ENCODE measurements at regions of chrX and their contacts with region 1.

Region 1: DNA sequence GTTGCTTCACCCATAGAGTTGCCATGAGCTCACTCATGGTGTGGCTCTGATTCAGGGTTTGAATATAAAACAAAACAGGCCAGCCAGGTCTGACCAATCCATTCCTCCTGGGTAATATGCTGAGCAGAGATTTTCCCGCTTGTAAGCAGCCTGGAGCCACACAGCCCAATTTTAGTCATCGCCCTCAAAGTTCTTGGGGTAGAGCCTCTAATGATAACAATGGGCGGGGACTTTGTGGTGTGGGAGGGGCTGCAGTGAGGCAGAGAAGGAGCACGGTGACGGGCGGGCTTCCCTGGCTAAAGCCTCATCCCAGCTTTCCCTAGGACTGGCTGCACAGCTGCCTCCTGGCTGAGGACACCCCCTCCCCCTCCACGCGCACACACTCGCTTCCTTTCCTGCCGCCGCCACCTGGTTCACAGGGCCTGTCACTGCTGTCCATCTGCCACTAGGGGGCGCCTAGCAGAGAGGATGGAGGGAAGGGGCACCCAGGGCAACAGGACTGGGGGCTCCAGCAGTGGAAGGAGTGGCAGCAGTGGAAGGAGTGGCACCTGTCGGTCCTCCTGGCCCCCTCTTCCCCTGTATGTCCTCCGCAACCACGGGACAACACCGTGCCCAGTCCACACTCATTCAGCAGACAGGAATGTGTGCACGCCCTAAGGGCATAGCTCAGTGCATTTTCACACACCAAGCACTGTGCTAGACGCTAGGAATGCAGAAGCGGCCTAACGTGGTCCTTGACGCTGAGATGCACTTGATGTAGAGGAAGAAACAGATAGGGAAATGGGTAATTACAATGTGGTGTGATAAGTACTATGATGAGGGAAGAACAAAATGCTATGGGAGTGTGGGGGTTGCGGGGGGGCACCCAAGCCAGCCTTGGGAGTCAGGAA is 26.8 kb downstream of the PRPS1 start:
- DNase-seq: peak; percentile 84
- H3K4me3 Mint-ChIP-seq: peak overlapping the region; percentile 45
- H3K27ac Mint-ChIP-seq: peak overlapping the region; percentile 89
- H3K4me1 Mint-ChIP-seq: peaks cover 15% of the 10 kb centered on the region
- H3K27me3 Mint-ChIP-seq: peaks cover 44% of the 10 kb centered on the region
- CTCF ChIP-seq: peak; percentile 66

Region 2: DNA sequence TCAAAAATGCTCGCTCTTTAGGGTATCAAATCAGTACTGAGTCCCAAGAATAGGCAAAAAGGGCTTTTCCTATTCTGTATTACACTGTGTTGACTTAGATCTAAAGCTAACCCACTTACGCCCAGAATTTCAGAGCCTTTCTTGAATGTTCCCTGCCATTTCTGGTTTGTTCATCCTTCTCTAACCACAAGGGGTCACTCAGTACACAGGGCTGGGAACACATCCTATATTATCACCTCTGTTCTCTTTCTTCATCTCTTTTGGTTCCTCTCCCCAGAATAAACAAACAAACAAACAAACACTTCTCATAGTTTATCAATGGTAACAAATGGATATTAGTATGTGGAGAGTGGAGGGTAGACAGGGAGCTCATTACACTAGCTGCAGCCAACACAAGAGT is 629.6 kb before region 1 on chrX:
- CTCF ChIA-PET with region 1: interaction called, 3 read pairs
- POLR2A ChIA-PET with region 1: interaction called, 3 read pairs
- intact Hi-C with region 1: loop called (anchors 10 kb)
- DNase-seq: peak; percentile 50
- H3K4me3 Mint-ChIP-seq: no peak overlapping the region
- H3K27ac Mint-ChIP-seq: no peak overlapping the region
- H3K4me1 Mint-ChIP-seq: no peaks in the 10 kb centered on the region
- H3K27me3 Mint-ChIP-seq: peaks cover 71% of the 10 kb centered on the region
- CTCF ChIP-seq: peak; percentile 58

Region 3: DNA sequence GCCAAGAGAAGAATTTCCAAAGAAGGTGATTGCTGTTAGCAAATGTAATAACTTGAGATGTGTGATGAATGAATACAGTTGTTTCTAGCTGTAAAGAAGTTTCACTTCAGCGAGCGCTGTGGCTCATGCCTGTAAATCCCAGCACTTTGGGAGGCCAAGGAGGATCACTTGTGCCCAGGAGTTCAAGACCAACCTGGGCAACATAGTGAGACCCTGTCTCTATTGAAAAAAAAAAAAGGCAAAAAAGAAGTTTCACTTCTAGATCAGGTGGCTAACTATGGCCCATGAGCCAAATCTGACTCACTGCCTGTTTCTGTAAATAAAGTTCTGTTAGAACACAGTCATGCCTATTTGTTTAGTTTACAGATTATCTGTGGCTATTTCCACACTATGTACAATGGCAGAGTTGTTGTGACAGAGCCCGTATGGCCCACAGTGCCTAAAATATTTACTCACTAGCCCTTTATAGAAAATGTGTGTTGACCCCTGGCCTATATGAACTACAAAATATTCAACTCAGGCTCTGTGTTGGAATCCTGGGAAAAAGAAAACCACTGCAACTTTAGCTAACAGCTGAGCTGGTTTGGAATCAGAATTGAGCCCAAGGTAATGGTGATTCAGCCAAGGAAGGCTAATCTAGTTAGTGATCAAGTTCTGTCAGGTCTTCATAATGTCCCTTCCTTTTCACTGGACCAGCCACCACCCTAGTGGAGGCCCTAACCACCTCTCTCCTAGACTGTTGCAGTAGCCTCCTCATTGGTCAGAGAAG is 80.9 kb before region 1 on chrX:
- CTCF ChIA-PET with region 1: no interaction called
- POLR2A ChIA-PET with region 1: no interaction called
- intact Hi-C with region 1: no loop called
- DNase-seq: peak; percentile 58
- H3K4me3 Mint-ChIP-seq: no peak overlapping the region
- H3K27ac Mint-ChIP-seq: peak overlapping the region; percentile 36
- H3K4me1 Mint-ChIP-seq: peaks cover 12% of the 10 kb centered on the region
- H3K27me3 Mint-ChIP-seq: peaks cover 10% of the 10 kb centered on the region
- CTCF ChIP-seq: no peak

Region 4: DNA sequence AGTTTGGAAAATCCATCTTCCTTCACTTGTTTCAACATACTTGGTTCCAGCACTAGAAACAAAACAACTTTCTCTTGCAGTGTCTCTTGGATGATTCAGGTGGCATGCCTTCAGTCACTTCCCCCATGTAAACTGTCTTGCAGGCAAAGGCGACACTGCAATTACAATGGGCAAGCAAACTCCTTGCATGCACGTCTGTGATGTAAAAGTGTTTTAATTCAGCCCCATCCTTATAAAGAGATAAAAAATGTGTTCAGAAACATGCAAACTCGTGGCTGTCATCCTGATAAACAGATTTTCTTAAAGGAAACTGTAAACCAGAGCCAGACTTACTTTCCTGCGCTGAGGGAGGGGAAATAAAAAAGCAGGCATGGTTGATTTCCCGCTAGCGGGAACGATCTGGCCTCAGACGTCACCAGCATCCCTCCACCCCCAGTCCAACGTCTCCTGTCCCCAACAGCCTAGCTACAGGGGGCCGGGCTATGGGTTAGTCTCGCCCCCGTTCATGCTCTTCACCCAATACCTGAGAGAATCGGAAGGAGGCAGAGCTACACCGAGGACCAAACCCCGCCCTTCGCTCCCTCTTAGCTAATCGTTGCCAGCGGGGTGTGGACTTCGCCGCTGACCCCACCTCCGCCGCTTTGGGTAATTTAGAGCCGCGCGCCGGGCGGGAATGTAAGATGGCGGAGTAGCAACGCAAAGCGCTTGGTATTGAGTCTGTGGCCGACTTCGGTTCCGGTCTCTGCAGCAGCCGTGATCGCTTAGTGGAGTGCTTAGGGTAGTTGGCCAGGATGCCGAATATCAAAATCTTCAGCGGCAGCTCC is 27.1 kb before region 1 on chrX and contains the start of gene PRPS1:
- CTCF ChIA-PET with region 1: interaction called, 4 read pairs
- POLR2A ChIA-PET with region 1: interaction called, 9 read pairs
- intact Hi-C with region 1: loop called (anchors 1 kb)
- DNase-seq: peak; percentile 93
- H3K4me3 Mint-ChIP-seq: peak within 1 kb of the TSS; percentile 79
- H3K27ac Mint-ChIP-seq: no peak within 1 kb of the TSS
- H3K4me1 Mint-ChIP-seq: no peaks in the 10 kb centered on the region
- H3K27me3 Mint-ChIP-seq: peaks cover 48% of the 10 kb centered on the region
- CTCF ChIP-seq: no peak
- total RNA-seq, gene PRPS1: 27.9 and 29.7 TPM in 2 replicates

Region 5: DNA sequence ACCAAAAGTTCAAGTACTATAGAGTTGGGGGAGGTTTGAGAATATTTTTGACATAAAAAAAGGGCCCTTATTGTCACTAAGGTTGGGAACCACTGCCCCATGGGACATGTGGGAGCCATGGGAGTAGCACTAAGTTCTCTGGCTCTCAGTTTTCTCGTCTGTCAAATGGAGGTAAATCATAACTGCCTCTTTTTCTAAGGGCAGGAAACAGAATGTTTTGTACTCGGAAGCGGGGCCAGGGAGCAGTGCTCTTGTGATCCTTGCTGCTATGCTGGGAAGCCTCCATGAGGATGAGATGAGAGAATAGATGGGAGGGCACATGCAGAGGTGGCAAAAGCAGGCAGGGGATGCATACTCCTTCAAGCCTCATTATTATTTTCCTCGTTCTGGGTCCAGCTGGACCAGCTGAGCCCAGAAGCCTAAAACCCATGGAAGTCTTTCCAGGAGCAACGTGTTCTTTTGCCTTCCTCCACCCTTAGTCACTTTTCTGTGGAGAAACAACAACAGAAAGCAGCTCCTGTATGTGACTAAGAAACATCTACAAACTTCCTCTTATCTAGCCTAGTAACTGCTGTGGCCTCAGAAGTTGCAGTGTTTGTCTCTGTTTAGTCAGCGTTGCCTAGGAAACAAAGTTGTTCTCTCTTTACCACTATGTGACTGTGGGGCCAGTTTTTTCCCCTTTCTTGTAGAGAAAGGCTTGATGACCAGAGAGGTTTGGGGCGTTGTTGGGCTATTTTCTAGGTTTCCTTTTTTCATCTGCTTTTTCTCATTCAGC is 55.7 kb after region 1 on chrX:
- CTCF ChIA-PET with region 1: interaction called, 8 read pairs
- POLR2A ChIA-PET with region 1: interaction called, 18 read pairs
- intact Hi-C with region 1: no loop called
- DNase-seq: peak; percentile 86
- H3K4me3 Mint-ChIP-seq: peak overlapping the region; percentile 20
- H3K27ac Mint-ChIP-seq: peak overlapping the region; percentile 97
- H3K4me1 Mint-ChIP-seq: peaks cover 14% of the 10 kb centered on the region
- H3K27me3 Mint-ChIP-seq: peaks cover 34% of the 10 kb centered on the region
- CTCF ChIP-seq: no peak

Region 6: GRCh38 chrX:107857799-107858198 is 202.7 kb after region 1 on chrX:
- CTCF ChIA-PET with region 1: no interaction called
- POLR2A ChIA-PET with region 1: no interaction called
- intact Hi-C with region 1: no loop called
- DNase-seq: no peak
- H3K4me3 Mint-ChIP-seq: no peak overlapping the region
- H3K27ac Mint-ChIP-seq: no peak overlapping the region
- H3K4me1 Mint-ChIP-seq: peaks cover 9% of the 10 kb centered on the region
- H3K27me3 Mint-ChIP-seq: peaks cover 87% of the 10 kb centered on the region
- CTCF ChIP-seq: no peak

Region 7: DNA sequence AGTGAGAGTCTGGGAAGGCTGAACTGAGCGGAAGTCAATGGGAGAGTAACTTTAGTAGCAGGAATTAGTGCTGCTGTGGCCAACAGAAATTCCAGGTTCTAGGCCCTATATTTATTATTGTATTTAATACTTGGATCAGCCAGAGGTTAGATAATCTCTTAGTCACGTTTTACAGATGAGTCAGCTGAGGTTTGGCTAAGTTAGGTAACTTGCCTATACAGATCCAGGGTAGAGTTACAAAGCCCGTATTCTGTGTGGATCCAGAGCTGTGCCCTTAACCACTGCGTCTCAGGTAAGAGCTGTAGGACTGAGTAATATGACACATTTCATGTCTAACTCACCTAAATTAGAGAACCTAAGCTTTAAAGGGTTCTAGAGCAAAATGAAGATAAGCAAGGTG is 415.8 kb after region 1 on chrX:
- CTCF ChIA-PET with region 1: interaction called, 3 read pairs
- POLR2A ChIA-PET with region 1: no interaction called
- intact Hi-C with region 1: loop called (anchors 2 kb)
- DNase-seq: peak; percentile 77
- H3K4me3 Mint-ChIP-seq: no peak overlapping the region
- H3K27ac Mint-ChIP-seq: no peak overlapping the region
- H3K4me1 Mint-ChIP-seq: peaks cover 15% of the 10 kb centered on the region
- H3K27me3 Mint-ChIP-seq: peaks cover 71% of the 10 kb centered on the region
- CTCF ChIP-seq: no peak